Activated T-helper 1 cell treated with anti-CD3 and anti-CD28 coated beads, Interleukin-12 subunit alpha, Interleukin-12 subunit beta, Interleukin-2, Interleukin-4 antibody, amounts not matched to agents 30 ng/mL and 10 ng/mL and 1 ng/mL, durations not matched to agents 14 hours and 24 hours and 36 hours (primary cell): ENCODE measurements at regions of chr3 and their contacts with region 1.

Region 1: GRCh38 chr3:88113311-88114162 is 36.2 kb upstream of the C3orf38 start:
- DNase-seq: peak; percentile 44
- H3K4me3 Mint-ChIP-seq: no peak overlapping the region
- H3K27ac Mint-ChIP-seq: no peak overlapping the region
- H3K4me1 Mint-ChIP-seq: peaks cover 17% of the 10 kb centered on the region
- H3K27me3 Mint-ChIP-seq: no peaks in the 10 kb centered on the region

Region 2: DNA sequence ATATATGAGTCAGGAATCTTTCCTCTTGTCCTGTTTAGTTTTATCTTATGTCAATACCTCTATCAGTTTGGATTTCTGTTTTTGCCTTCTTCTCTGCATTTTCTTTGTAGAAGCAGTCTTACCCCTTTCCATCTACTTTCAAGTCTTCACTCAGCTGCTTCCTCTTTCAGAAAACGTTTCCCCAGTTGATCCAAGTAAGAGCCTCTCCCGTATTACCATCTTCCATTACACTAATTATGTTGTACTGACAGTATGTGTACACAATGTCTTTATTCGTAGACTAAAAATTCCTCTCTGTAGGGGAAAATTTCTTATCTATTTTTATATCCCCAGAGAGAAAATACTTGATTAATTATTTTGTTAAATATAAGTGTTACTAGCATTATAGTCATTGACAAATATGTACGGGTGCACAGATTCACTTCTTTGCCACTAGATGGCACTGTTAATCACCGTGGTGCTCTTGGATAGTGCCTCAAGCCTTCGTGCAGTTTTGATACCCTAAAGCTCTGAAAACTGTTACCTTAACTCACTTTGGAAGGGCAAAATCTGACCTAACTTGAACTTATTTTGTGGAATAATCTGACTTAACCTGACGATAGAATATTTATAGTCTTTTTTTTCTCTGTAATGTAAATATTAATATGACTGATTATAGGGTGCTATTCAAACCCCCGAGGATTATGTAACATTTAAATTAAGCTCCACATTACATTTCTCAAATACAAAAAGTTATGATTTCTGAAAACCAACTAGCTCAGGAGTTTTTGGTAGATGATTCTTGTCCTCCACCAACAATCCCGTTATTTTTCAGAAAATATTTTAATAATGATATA is 763.0 kb before region 1 on chr3:
- intact Hi-C with region 1: loop called (anchors 2 kb)
- DNase-seq: no peak
- H3K4me3 Mint-ChIP-seq: no peak overlapping the region
- H3K27ac Mint-ChIP-seq: no peak overlapping the region
- H3K4me1 Mint-ChIP-seq: no peaks in the 10 kb centered on the region
- H3K27me3 Mint-ChIP-seq: peaks cover 9% of the 10 kb centered on the region

Region 3: DNA sequence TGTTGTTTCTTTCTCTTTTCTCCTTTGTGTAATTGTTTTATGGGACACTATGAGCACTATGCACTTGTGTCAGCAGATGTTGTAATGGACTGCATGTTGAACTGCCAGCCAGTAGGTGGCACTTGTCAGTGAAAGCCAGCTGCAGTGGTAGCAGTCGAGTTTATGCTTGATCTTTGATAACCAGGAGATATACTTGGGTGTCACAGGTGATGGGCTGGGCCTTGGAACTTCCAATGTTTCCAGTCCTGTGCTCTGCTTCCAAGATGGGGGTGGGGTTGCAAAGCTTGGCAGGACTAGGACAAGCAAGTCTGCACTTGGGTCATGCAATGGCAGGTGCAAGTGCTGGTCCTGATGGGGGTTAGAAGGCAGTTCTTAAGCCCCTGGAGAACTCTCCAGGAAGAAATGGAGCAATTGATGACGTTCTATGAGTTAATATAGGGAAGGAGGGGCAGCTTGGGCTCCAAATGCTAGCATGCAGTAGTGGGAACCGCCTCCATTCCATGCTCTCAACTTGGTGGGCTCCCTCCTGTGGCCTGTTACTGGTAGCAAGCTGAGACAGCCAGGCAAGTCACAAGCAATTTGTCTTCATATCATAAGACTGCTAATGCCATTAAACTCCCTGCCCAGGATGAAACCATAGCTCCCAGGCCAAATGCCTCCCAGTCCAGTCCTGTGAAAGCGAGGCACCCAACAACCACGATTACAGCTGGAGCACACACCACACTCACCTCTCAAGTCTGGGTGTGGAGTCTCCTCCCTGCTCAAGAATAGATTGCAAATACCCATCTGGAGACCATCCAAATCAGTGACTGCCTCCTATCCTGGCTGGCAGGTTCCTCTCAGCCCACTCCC is 342.0 kb before region 1 on chr3:
- intact Hi-C with region 1: loop called (anchors 1 kb)
- DNase-seq: peak; percentile 17
- H3K4me3 Mint-ChIP-seq: no peak overlapping the region
- H3K27ac Mint-ChIP-seq: no peak overlapping the region
- H3K4me1 Mint-ChIP-seq: no peaks in the 10 kb centered on the region
- H3K27me3 Mint-ChIP-seq: peaks cover 16% of the 10 kb centered on the region